Dendritic cell treated with granulocyte-macrophage colony-stimulating factor and Interleukin-4, amounts not matched to agents 40 ng/mL and 50 ng/mL, for 4 days (primary cell): ENCODE measurements at regions of chr6 and their contacts with region 1.

Region 1: GRCh38 chr6:36360241-36361054 is 23.8 kb upstream of the BNIP5 start:
- H3K4me3 Mint-ChIP-seq: no peak overlapping the region
- H3K27ac Mint-ChIP-seq: peak overlapping the region; percentile 8
- H3K4me1 Mint-ChIP-seq: peaks cover 49% of the 10 kb centered on the region
- H3K27me3 Mint-ChIP-seq: peaks cover 4% of the 10 kb centered on the region

Region 2: DNA sequence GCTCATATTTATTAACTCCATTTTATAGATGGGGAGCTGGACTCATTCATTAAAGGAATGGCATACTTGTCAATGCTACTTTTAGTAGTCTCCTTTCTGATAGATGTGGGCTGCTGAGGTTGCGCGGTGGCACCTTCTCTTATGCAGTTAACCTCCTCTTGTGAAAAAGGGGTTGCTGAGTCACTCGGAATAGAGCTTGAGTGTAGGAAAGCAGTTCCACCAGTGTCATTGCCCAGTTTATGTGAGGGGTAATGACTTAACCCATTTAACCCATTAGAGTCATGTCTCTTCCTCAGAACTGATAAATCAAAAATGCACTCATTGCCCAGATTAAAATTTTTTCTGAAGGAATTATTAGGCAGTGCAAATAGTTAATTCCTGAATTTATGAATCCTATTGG is 326.5 kb before region 1 on chr6:
- intact Hi-C with region 1: loop called (anchors 10 kb)
- H3K4me3 Mint-ChIP-seq: peak overlapping the region; percentile 20
- H3K27ac Mint-ChIP-seq: peak overlapping the region; percentile 73
- H3K4me1 Mint-ChIP-seq: peaks cover 69% of the 10 kb centered on the region
- H3K27me3 Mint-ChIP-seq: no peaks in the 10 kb centered on the region

Region 3: DNA sequence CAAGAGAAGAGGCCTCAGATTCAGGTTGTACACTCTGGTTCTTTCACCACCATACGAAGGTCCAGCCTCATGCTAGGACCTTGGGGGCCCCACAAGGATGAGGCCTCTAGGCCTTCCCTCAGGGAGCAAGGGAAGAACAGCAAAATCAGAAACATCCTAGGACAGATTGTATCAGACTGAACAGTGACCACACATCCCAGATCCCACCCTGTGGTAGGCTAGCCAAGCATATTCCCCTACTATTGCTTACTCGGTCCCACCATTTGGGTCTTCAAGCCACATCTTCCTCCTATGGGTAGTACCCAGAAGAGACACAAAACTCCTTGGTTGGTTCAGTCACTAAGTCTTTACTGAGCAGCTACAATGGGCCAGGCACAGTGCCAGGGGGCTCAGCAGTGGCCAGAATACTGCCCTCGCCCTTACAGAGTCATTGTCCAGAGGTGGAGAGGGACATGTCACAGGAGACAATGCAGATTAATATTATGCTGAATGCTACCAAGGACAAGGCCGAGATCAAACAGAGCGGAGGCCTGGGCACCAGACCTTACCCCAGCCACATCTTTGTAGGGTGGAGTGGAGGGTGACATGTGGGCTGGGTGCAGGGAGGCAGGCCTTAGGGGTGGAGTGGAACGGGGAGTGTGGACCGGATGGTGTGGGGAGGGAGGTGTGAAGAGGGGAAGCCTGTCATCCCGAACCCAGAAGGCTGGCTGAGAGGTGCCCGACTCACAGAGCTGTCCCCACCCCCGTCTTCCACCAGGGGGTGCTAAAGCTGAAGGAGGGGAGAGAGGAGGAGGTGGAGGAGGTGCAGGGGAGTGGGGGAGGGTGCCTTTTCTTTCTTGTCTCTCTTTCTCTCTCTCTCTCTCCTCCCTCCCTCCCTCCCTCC is 236.9 kb before region 1 on chr6:
- intact Hi-C with region 1: loop called (anchors 5 kb)
- H3K4me3 Mint-ChIP-seq: no peak overlapping the region
- H3K27ac Mint-ChIP-seq: peak overlapping the region; percentile 74
- H3K4me1 Mint-ChIP-seq: peaks cover 84% of the 10 kb centered on the region
- H3K27me3 Mint-ChIP-seq: no peaks in the 10 kb centered on the region

Region 4: GRCh38 chr6:36302227-36302976 is 58.0 kb before region 1 on chr6:
- intact Hi-C with region 1: loop called (anchors 2 kb)
- H3K4me3 Mint-ChIP-seq: no peak overlapping the region
- H3K27ac Mint-ChIP-seq: no peak overlapping the region
- H3K4me1 Mint-ChIP-seq: peaks cover 35% of the 10 kb centered on the region
- H3K27me3 Mint-ChIP-seq: no peaks in the 10 kb centered on the region

Region 5: DNA sequence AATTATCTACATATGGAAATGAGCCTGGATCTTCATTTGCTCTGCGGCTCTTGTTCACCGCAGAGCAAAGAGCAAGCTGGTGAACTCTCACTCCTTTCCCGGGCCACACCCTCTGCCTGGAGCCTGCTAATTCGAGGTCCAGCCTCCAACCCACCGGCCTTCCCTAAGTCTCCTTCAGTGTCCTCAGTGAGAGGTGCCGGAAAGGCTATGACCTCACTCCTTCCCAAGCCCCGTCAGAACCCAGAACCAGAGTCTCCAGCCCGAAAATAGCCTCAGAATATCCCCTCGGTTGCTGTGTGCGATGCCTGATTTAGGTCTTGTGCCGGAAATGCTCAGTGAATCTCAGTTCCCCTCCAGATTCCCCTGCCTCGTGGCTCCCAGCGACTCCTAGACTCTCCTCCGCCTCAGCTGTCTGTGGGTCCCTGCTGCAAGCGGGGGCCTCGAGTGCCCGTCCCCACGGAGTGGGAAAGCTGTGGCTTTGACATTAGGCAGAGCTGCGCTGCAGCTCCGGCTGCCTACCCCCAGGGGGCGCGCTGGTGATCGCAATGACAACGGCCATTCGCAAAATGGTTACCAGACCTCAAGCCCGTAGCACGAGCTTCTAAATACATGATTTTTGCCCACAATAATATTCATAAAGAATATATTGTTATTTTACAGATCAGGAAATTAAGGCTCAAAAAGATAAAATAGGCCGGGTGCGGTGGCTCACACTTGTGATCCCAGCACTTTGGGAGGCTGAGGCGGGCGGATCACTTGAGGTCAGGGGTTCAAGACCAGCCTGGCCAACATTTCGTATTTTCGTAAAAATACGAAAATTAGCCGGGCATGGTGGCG is 19.6 kb before region 1 on chr6:
- intact Hi-C with region 1: loop called (anchors 2 kb)
- H3K4me3 Mint-ChIP-seq: peak overlapping the region; percentile 58
- H3K27ac Mint-ChIP-seq: peak overlapping the region; percentile 58
- H3K4me1 Mint-ChIP-seq: peaks cover 17% of the 10 kb centered on the region
- H3K27me3 Mint-ChIP-seq: peaks cover 32% of the 10 kb centered on the region

Region 6: DNA sequence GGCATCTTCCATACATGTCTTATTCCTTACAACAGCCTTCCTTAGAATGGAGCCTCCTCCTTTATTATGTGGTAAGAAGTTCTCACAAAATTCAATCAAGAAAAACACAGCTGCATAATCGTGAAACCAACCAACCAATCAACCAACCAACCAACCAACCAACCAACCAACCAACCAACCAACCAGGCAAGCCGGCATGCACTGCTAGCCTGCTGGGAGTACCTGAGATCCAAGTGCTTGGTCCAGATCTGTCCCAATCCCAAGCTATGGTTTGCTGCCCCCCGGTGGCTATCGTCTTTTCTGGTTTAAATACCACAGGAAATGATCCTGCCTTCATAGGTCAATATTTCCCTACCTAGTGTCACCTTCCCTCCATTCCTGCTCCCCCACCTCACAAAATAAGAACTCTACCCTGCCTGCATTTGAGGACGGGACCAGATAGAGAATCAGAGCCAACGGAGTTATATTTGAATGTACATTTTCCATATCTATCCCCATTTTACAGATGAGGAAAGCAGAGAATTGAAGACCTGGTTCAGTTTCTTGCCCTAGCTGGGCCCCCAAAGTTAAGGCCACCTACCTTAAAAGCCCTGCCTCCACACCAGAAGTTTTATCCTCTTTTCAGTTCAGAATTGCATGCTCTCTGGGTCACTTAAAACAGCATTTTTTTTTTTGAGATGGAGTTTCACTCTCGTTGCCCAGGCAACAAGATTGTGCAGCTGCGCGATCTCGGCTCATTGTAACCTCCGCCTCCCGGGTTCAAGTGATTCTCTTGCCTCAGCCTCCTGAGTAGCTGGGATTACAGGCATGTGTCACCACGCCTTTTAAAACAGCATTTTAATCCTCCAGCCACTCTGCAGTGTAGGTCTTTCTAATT is 364.3 kb after region 1 on chr6:
- intact Hi-C with region 1: no loop called
- H3K4me3 Mint-ChIP-seq: no peak overlapping the region
- H3K27ac Mint-ChIP-seq: peak overlapping the region; percentile 22
- H3K4me1 Mint-ChIP-seq: peaks cover 43% of the 10 kb centered on the region
- H3K27me3 Mint-ChIP-seq: no peaks in the 10 kb centered on the region